Body of pancreas (tissue), 4 donors: ENCODE measurements at regions of chr2 and their contacts with region 1.

Region 1: GRCh38 chr2:117835990-117836760 is 21.7 kb downstream of the DDX18 start:
- DNase-seq: peak; percentile 83 to 88 (median 84)
- ATAC-seq: peak; percentile 95
- H3K4me3 ChIP-seq: peak overlapping the region; percentile 13 to 18
- H3K27ac ChIP-seq: no peak overlapping the region
- H3K4me1 ChIP-seq: peaks cover 7% of the 10 kb centered on the region
- H3K27me3 ChIP-seq: no peaks in the 10 kb centered on the region
- CTCF ChIP-seq: peak; percentile 63 to 84 (median 77)
- POLR2A ChIP-seq: peak in 2 of 3 donors; percentile 24 to 45

Region 2: DNA sequence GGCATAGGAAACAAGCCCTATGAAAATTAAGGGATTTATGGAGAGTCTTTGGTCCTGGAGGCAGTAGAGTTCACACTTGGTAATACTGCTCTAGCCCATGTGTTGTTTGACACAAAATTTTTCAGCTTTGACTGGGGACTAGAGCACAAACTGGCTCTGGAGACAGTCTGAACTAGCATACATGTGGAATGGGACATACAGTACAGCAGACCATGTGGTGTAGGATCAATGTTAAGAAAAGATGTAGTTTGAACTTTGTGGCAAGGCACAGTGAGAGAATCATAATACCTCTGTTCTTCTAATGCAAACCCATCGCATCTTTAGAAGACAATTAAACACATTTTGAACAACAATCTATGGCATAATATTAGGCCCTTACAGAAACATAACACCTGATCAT is 543.2 kb before region 1 on chr2:
- intact Hi-C with region 1: no loop called
- DNase-seq: no peak
- ATAC-seq: no peak
- H3K4me3 ChIP-seq: no peak overlapping the region
- H3K27ac ChIP-seq: no peak overlapping the region
- H3K4me1 ChIP-seq: no peaks in the 10 kb centered on the region
- H3K27me3 ChIP-seq: no peaks in the 10 kb centered on the region
- CTCF ChIP-seq: no peak
- POLR2A ChIP-seq: no peak

Region 3: DNA sequence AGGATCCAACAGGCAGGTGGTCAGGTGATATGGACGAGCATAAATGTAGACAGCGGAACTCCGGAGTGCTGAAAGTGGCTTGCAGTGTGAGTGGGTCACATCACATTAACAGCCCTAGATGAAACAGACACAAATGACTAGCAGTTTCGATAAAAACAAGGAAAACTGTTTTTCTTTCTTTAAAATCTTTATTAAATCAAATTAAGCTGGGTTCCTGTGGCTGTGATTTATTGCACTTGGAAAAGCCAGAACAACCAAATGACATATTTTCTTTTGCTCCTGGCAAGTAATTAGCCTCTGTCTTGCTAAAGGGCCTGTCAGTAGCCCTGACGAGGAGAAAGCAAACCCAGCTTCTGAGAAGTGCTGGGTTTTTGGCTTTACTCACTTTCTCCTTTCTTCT is 174.6 kb before region 1 on chr2:
- intact Hi-C with region 1: no loop called
- DNase-seq: no peak
- ATAC-seq: no peak
- H3K4me3 ChIP-seq: no peak overlapping the region
- H3K27ac ChIP-seq: no peak overlapping the region
- H3K4me1 ChIP-seq: no peaks in the 10 kb centered on the region
- H3K27me3 ChIP-seq: no peaks in the 10 kb centered on the region
- CTCF ChIP-seq: no peak
- POLR2A ChIP-seq: no peak

Region 4: GRCh38 chr2:117801826-117802225 is 34.3 kb before region 1 on chr2:
- intact Hi-C with region 1: no loop called
- DNase-seq: no peak
- ATAC-seq: no peak
- H3K4me3 ChIP-seq: no peak overlapping the region
- H3K27ac ChIP-seq: no peak overlapping the region
- H3K4me1 ChIP-seq: no peaks in the 10 kb centered on the region
- H3K27me3 ChIP-seq: no peaks in the 10 kb centered on the region
- CTCF ChIP-seq: no peak
- POLR2A ChIP-seq: no peak

Region 5: GRCh38 chr2:118003396-118003824 is 167.2 kb after region 1 on chr2:
- intact Hi-C with region 1: loop called (anchors 10 kb)
- DNase-seq: peak; percentile 38 to 72 (median 50)
- ATAC-seq: peak; percentile 90
- H3K4me3 ChIP-seq: no peak overlapping the region
- H3K27ac ChIP-seq: no peak overlapping the region
- H3K4me1 ChIP-seq: no peaks in the 10 kb centered on the region
- H3K27me3 ChIP-seq: no peaks in the 10 kb centered on the region
- CTCF ChIP-seq: peak; percentile 63 to 88 (median 80)
- POLR2A ChIP-seq: no peak